ENCODE measurements at regions of chr1 and their contacts with region 1.

Region 1: GRCh38 chr1:37704966-37705365 is 12.7 kb downstream of the CDCA8 start:
- DNase-seq: no peak
- ATAC-seq: no peak
- H3K4me3 ChIP-seq: no peak overlapping the region
- H3K27ac ChIP-seq: 0 out of 2 replicates have a peak overlapping the region, but pooled peaks have one; percentile 28
- H3K4me1 ChIP-seq: peaks cover 6% of the 10 kb centered on the region
- H3K27me3 ChIP-seq: no peaks in the 10 kb centered on the region
- CTCF ChIP-seq: no peak
- EP300 ChIP-seq: no peak
- POLR2A ChIP-seq: no peak
- RAD21 ChIP-seq: no peak

Region 2: DNA sequence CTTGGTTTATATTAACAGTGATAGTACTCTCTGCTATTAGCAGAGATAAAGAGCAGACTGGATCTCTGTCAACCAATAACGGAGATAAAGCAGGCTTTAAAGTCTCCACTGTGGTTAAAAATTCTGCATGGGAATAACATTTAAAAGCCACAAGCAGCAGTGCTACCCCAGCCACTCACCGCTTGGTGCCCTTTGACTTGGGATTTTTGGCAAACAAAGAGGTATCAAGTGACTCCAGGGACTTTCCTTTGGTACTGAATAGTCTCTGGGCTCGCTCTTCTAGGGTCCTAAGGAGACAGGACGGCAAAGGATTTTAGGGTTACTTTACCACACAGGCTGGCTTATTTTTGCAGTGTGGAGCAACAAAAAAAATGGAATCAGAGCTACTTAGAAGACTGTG is 273.6 kb after region 1 on chr1:
- CTCF ChIA-PET with region 1: no interaction called
- POLR2A ChIA-PET with region 1: no interaction called
- RAD21 ChIA-PET with region 1: no interaction called
- SMC1A ChIA-PET with region 1: interaction called, 3 read pairs
- in situ Hi-C with region 1: loop called (anchors 10 kb)
- intact Hi-C with region 1: no loop called
- DNase-seq: no peak
- ATAC-seq: no peak
- H3K4me3 ChIP-seq: no peak overlapping the region
- H3K27ac ChIP-seq: no peak overlapping the region
- H3K4me1 ChIP-seq: no peaks in the 10 kb centered on the region
- H3K27me3 ChIP-seq: no peaks in the 10 kb centered on the region
- CTCF ChIP-seq: no peak
- EP300 ChIP-seq: no peak
- POLR2A ChIP-seq: no peak
- RAD21 ChIP-seq: no peak

Measured in GM12878 (cell line).